ENCODE measurements at regions of chr1 and their contacts with region 1.

Region 1: GRCh38 chr1:93846211-93846991 is 32.6 kb downstream of the DNTTIP2 start:
- DNase-seq: peak; percentile 83
- H3K4me3 ChIP-seq: peak overlapping the region; percentile 65 to 90 (median 67)
- H3K27ac ChIP-seq: peak overlapping the region; percentile 99
- H3K4me1 ChIP-seq: peaks cover 25% of the 10 kb centered on the region
- H3K27me3 ChIP-seq: no peaks in the 10 kb centered on the region
- CTCF ChIP-seq: peak; percentile 27 to 53
- POLR2A ChIP-seq: peak; percentile 72

Region 2: DNA sequence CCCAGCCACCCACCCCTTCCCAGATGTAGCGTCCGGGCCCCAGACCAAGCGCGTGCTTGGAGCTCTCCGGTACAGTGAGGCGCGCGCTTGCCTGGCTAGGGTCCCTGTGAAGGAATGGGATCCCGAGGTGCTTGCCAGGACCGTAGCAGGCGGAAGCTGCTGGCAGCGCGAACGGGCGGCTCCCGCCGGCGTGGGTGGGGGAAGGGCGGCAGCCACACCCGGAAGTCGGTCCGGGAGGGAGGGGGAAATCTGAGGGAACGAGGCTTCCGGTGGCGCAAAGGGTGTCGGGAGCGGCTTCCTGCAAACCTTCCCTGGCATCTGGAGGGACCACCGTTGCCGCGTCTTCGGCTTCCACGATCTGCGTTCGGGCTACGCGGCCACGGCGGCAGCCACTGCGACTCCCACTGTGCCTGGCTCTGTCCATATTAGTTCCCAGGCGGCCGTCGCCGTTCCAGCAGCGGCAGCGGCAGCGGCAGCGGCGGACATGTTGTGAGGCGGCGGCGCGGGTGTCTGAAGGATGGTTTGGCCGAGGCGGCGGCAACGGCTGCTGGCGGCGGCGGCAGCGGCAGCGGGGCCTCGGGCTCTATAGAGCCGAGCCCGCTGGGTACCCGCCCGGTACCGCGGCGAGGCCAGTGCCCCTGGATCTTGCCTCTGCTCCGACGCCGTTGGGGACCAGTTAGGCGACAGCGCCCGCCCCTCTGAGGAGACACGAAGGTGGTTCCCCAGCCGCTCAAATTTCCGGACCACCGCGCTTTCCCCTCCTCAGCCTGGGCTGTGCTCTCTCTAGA is 500.6 kb before region 1 on chr1 and contains the start of gene DR1:
- CTCF ChIA-PET with region 1: no interaction called
- POLR2A ChIA-PET with region 1: no interaction called
- dilution Hi-C with region 1: no loop called
- intact Hi-C with region 1: loop called (anchors 2 kb)
- DNase-seq: peak; percentile 94
- H3K4me3 ChIP-seq: peak within 1 kb of the TSS; percentile 89 to 99 (median 97)
- H3K27ac ChIP-seq: peak within 1 kb of the TSS; percentile 88
- H3K4me1 ChIP-seq: peaks cover 22% of the 10 kb centered on the region
- H3K27me3 ChIP-seq: no peaks in the 10 kb centered on the region
- CTCF ChIP-seq: no peak
- POLR2A ChIP-seq: peak; percentile 93
- total RNA-seq, gene DR1: 49.4 and 52.2 TPM in 2 replicates

Region 3: DNA sequence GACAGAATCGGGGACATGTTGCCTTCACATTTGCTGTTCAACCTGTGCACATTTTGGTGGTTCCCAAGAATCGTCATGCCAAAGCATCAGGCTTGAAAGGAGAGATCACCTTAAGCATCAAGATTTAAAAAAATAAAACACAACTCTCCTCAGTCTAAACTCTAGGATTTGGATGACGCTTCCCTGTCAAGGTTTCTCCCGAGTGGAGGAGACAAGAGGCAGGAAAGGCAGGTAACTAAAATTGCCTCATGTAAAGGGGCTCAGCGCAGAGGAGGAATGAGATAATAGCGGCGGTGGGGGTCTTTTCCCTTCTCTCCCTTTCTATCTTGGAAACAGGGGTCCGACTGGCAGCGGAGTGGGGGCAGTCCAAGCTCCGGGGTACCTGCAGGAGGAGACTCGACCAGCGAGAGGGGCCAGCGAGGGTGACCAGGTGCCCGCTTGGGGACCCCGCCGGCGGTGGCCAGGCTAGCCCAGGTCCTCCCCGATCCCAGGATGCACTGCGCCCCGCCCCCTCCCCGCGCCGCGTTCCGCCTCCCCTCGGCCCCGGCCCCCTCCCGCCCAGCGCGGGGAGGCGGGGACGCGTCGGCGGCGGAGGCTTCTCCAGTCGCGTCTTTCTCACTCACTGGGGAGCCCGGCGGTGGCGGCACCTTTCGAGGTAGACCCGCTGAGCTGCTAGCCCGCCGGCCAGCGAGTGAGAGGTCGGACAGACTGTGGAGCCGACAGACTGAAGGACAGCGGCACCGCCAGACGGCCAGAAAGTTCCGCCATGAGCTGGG is 398.7 kb before region 1 on chr1 and contains the start of gene FNBP1L:
- CTCF ChIA-PET with region 1: interaction called, 14 read pairs
- POLR2A ChIA-PET with region 1: interaction called, 4 read pairs
- dilution Hi-C with region 1: no loop called
- intact Hi-C with region 1: loop called (anchors 2 kb)
- DNase-seq: peak; percentile 78
- H3K4me3 ChIP-seq: peak within 1 kb of the TSS; percentile 14 to 80 (median 70)
- H3K27ac ChIP-seq: peak within 1 kb of the TSS; percentile 65
- H3K4me1 ChIP-seq: peaks cover 13% of the 10 kb centered on the region
- H3K27me3 ChIP-seq: no peaks in the 10 kb centered on the region
- CTCF ChIP-seq: no peak
- POLR2A ChIP-seq: peak; percentile 85
- total RNA-seq, gene FNBP1L: 56.4 and 56.5 TPM in 2 replicates

Region 4: DNA sequence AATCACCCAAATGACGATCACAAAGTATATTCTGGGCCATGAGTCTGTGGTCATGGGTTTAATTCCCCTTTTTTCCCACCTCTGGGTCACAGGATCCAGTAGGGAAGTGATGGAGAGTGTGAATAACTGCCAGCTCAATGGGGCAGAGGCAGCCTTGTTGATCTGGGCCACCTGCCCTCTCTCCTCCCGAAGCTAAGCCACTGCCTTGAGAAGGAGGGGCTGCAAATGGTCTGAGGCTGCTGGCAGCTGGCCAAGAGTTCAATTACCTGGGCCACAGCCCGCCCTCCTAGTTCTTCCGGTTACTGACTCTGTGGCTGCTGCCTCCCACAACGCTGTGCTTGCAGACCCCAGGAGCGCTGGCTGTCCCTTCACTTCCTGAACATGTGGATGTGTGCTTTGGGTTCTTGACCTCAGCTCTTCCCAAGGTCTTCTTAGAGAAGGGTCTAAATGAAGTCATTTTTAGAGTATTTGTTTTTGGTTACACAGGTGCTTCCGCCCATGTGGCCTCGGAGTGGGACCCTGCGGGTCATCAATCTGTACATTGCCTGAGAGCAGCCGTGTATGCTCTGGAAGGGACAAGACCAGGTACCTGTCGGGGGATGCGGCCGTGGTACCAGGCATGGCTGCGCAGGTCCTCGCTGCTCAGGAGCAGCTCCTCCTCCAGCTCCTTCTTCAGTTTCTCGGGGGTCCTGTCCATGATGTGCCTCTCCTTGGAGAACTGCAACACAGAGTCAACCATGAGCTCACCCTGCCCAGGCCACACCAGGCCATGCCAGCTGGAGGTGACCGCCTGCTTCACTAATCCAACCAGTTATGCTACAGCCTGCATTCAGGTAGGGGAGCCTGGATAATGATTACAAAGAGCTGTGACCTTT is 254.5 kb before region 1 on chr1:
- CTCF ChIA-PET with region 1: interaction called, 10 read pairs
- POLR2A ChIA-PET with region 1: no interaction called
- dilution Hi-C with region 1: no loop called
- intact Hi-C with region 1: loop called (anchors 1 kb)
- DNase-seq: no peak
- H3K4me3 ChIP-seq: no peak overlapping the region
- H3K27ac ChIP-seq: no peak overlapping the region
- H3K4me1 ChIP-seq: peaks cover 32% of the 10 kb centered on the region
- H3K27me3 ChIP-seq: no peaks in the 10 kb centered on the region
- CTCF ChIP-seq: no peak
- POLR2A ChIP-seq: no peak

Region 5: GRCh38 chr1:93615582-93616150 is 230.7 kb before region 1 on chr1:
- CTCF ChIA-PET with region 1: interaction called, 25 read pairs
- POLR2A ChIA-PET with region 1: no interaction called
- dilution Hi-C with region 1: no loop called
- intact Hi-C with region 1: no loop called
- DNase-seq: peak; percentile 28
- H3K4me3 ChIP-seq: no peak overlapping the region
- H3K27ac ChIP-seq: peak overlapping the region; percentile 21
- H3K4me1 ChIP-seq: peaks cover 34% of the 10 kb centered on the region
- H3K27me3 ChIP-seq: no peaks in the 10 kb centered on the region
- CTCF ChIP-seq: no peak
- POLR2A ChIP-seq: no peak

Region 6: DNA sequence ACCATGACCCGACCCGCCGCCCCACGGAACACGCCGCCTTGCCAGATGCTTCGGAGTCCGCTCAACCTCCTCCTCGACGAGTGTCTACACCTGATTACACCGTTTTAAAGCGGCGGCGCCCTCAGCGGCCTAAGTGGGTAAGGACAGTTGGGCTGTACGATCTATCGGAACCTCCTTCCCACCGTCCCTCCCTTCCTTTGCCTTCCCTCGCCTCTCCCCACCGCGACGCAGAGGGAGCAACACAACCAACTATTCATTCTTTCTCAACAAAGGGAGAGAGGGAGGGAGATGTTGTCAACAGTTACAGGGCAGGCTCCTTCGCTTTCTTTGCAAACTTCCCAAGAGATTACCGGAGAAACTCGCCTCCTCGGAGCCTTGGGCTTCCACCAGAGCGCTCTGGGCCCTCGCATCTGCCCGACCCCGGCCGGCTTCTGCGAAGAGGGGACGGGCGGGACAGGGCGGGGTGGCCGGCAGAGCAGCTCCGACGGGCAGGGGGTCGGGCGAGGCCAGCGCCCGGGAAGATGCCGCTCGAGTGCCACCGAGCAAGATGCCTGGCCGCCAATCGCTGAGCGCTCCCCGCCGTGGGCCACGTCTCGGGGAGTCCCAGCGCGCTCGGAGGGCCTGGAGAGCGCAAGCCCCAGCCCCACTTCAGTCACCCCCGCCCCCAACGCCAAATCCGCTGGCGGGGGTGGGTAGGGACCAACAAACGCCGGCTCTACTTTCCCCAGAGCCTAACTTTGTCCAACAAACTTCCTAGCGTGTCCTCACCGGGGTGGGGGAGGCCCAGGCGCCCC is 165.4 kb before region 1 on chr1:
- CTCF ChIA-PET with region 1: interaction called, 15 read pairs
- POLR2A ChIA-PET with region 1: interaction called, 4 read pairs
- dilution Hi-C with region 1: no loop called
- intact Hi-C with region 1: loop called (anchors 1 kb)
- DNase-seq: peak; percentile 89
- H3K4me3 ChIP-seq: peak overlapping the region; percentile 55 to 80 (median 72)
- H3K27ac ChIP-seq: peak overlapping the region; percentile 84
- H3K4me1 ChIP-seq: peaks cover 42% of the 10 kb centered on the region
- H3K27me3 ChIP-seq: no peaks in the 10 kb centered on the region
- CTCF ChIP-seq: peak; percentile 38 to 70
- POLR2A ChIP-seq: peak; percentile 62

Region 7: DNA sequence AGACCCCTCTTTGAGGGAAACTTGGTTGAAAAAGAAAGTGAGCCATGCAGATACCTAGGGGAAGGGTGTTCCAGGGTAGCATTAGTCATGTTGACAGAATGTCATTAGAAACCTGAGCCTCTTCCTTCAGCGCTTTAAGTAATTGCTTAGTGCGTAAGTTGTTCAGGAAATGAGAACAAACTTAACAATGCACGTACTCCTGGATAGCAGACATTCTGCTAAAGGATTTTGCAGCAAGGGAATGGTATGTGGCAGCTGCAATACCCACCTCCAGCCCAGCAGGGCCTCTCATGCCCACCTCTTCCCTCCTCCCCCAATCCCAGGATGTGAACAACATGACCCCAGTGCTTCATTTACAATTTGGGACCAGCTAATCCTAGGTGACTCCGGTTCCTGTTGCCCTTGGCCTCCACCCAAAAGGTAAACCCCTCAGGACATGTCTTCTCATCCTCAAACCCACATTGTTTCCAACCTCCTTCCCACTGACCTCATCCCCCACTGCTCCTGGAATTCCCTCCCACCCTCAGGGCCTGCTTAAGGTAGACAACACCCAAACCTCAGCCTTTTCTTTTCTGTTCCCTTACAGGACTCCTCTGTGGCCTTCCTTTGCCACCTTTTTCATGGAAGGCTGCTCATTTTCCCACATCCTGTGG is 66.7 kb before region 1 on chr1:
- CTCF ChIA-PET with region 1: interaction called, 5 read pairs
- POLR2A ChIA-PET with region 1: no interaction called
- dilution Hi-C with region 1: no loop called
- intact Hi-C with region 1: loop called (anchors 2 kb)
- DNase-seq: peak; percentile 84
- H3K4me3 ChIP-seq: no peak overlapping the region
- H3K27ac ChIP-seq: peak overlapping the region; percentile 93
- H3K4me1 ChIP-seq: peaks cover 17% of the 10 kb centered on the region
- H3K27me3 ChIP-seq: no peaks in the 10 kb centered on the region
- CTCF ChIP-seq: peak in 1 of 2 donors; percentile 19
- POLR2A ChIP-seq: no peak

Measured in endothelial cell of umbilical vein (primary cell).